Activated T-helper 1 cell treated with anti-CD3 and anti-CD28 coated beads, Interleukin-12 subunit alpha, Interleukin-12 subunit beta, Interleukin-2, Interleukin-4 antibody, amounts not matched to agents 30 ng/mL and 10 ng/mL and 1 ng/mL, durations not matched to agents 14 hours and 24 hours and 36 hours (primary cell): ENCODE measurements at regions of chr4 and their contacts with region 1.

Region 1: DNA sequence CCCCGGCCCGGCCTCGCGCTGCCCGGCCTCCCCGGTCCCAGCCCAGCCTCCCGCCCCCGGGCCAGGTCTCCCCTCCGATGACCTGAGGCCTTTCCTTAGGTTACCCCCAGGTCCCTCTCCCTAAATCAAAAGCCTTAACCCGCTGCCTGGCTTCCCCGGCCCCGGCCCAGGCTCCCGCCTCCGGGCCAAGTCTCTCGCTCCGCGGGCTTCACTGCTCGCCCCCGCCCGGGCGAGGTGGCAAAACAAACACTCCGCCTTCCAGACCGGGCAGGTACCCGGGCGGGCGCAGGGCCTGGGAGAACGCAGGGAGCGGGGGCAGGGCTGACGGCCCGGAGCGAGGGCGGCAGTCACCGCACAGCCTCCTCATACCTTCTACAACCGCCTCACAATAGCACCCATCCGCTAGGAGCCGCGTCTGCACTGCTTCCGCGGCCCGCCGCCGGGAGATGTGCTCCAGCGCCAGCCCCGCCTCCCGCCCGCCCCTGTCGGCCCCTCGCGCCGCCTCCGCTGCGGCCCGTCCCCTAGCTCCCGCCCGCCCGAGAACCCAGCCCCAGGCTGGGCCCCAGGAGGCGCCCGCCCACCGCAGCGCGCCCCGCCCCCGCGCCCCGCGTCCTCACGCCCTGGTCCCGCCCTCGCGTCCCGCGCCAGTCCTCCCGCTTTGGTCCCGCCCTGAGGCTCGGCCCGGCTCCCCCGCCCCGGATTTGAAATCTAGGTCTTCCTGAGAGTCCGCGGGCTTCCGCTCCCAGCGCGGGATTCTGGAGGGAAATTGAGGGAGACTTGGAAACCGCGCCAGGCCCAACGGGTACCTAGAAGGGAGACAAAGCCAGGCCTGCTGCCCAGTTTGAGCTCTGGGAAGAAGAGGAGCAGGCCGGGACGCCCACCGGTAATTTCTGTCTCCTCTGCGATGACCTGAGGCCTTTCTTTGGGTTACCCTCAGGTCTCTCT is at the starts of genes CASP3 and PRIMPOL:
- DNase-seq: peak; percentile 96
- H3K4me3 Mint-ChIP-seq: peak within 1 kb of the TSS; percentile 95
- H3K27ac Mint-ChIP-seq: peak within 1 kb of the TSS; percentile 91
- H3K4me1 Mint-ChIP-seq: peaks cover 59% of the 10 kb centered on the region
- H3K27me3 Mint-ChIP-seq: no peaks in the 10 kb centered on the region
- total RNA-seq, gene CASP3: 116 and 121 TPM in 2 replicates
- total RNA-seq, gene PRIMPOL: 16.4 and 19.7 TPM in 2 replicates

Region 2: GRCh38 chr4:184282251-184282713 is 367.0 kb before region 1 on chr4:
- intact Hi-C with region 1: loop called (anchors 2 kb)
- DNase-seq: peak; percentile 53
- H3K4me3 Mint-ChIP-seq: peak overlapping the region; percentile 50
- H3K27ac Mint-ChIP-seq: peak overlapping the region; percentile 87
- H3K4me1 Mint-ChIP-seq: peaks cover 75% of the 10 kb centered on the region
- H3K27me3 Mint-ChIP-seq: no peaks in the 10 kb centered on the region

Region 3: GRCh38 chr4:184506527-184507121 is 142.7 kb before region 1 on chr4:
- intact Hi-C with region 1: no loop called
- DNase-seq: peak; percentile 48
- H3K4me3 Mint-ChIP-seq: peak overlapping the region; percentile 30
- H3K27ac Mint-ChIP-seq: peak overlapping the region; percentile 60
- H3K4me1 Mint-ChIP-seq: peaks cover 43% of the 10 kb centered on the region
- H3K27me3 Mint-ChIP-seq: no peaks in the 10 kb centered on the region

Region 4: GRCh38 chr4:184538023-184538599 is 111.2 kb before region 1 on chr4:
- intact Hi-C with region 1: loop called (anchors 1 kb)
- DNase-seq: peak; percentile 55
- H3K4me3 Mint-ChIP-seq: peak overlapping the region; percentile 91
- H3K27ac Mint-ChIP-seq: peak overlapping the region; percentile 94
- H3K4me1 Mint-ChIP-seq: peaks cover 64% of the 10 kb centered on the region
- H3K27me3 Mint-ChIP-seq: no peaks in the 10 kb centered on the region

Region 5: DNA sequence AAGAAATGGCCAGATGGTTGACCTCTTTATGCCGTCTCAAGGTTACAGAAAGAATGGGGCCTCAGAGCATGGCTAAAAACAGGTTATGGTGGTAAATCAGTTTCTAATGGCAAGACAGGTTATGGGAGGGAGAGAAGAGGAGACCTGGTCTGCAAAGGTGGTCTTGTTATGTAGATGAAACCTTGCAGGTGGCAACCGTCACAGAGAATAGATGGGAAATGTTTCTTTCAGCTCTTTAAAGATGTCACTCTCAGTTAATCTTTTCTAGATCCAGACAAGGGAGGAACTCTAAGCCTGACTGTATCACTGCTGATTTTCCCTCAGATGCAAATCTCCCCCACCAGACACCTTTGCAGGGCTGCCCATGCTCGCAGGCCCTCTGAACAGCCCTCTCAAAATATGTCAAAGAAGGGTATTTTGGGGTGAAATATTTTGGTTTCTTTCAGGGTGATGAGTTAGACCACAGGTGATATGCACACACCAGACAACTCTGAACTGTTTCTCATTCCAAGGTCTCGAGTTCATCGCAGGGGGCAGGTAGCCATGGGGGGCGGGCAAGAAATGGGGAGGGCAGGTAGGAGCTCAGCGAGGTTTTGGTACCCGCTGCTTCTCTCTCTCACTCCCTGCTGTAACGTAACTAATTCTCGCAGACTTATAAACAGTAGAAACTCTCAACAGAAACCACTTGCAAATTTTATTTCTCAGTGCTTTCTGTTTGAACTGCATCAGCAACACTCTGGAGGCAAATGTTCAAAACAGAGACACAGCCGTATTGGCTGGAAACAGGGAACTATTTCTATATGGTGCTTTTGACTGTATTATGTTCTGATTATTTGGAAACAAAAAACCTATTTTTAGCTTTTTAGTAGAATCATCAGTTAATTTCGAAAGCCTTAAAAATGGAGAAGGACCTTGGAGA is 32.4 kb before region 1 on chr4:
- intact Hi-C with region 1: no loop called
- DNase-seq: no peak
- H3K4me3 Mint-ChIP-seq: no peak overlapping the region
- H3K27ac Mint-ChIP-seq: no peak overlapping the region
- H3K4me1 Mint-ChIP-seq: no peaks in the 10 kb centered on the region
- H3K27me3 Mint-ChIP-seq: no peaks in the 10 kb centered on the region

Region 6: DNA sequence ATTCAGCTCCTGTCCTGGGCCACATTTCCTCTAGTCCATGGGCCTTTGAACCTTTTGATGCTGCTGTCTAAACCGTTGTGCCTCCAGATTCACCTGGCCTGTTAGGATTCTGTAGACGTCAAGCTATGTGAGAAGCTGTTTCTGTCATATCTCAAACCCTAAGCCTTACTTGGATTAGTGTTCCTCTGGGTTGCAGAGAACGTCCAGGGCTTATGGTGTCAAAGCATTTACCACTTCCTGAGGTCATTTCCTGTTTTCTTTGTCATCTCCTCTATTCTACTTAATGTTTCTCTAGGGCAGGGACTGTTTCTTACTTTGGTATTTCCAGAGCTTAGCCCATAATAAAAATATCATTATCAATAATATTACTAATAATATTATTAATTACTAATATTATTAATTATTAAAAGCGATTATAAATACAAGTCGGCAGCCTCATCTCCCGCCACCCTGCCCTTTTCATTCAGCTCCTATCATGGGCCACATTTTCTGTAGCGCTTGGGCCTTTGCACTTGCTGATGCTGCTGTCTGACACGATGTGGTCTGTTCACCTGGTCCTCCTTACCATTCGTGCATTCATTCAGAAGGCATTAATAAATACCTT is 19.3 kb after region 1 on chr4:
- intact Hi-C with region 1: loop called (anchors 1 kb)
- DNase-seq: no peak
- H3K4me3 Mint-ChIP-seq: peak overlapping the region; percentile 35
- H3K27ac Mint-ChIP-seq: peak overlapping the region; percentile 82
- H3K4me1 Mint-ChIP-seq: peaks cover 42% of the 10 kb centered on the region
- H3K27me3 Mint-ChIP-seq: no peaks in the 10 kb centered on the region

Region 7: GRCh38 chr4:184961660-184962059 is 312.4 kb after region 1 on chr4:
- intact Hi-C with region 1: loop called (anchors 5 kb)
- DNase-seq: no peak
- H3K4me3 Mint-ChIP-seq: no peak overlapping the region
- H3K27ac Mint-ChIP-seq: no peak overlapping the region
- H3K4me1 Mint-ChIP-seq: peaks cover 4% of the 10 kb centered on the region
- H3K27me3 Mint-ChIP-seq: peaks cover 15% of the 10 kb centered on the region